ENCODE measurements at regions of chr18 and their contacts with region 1.

Region 1: DNA sequence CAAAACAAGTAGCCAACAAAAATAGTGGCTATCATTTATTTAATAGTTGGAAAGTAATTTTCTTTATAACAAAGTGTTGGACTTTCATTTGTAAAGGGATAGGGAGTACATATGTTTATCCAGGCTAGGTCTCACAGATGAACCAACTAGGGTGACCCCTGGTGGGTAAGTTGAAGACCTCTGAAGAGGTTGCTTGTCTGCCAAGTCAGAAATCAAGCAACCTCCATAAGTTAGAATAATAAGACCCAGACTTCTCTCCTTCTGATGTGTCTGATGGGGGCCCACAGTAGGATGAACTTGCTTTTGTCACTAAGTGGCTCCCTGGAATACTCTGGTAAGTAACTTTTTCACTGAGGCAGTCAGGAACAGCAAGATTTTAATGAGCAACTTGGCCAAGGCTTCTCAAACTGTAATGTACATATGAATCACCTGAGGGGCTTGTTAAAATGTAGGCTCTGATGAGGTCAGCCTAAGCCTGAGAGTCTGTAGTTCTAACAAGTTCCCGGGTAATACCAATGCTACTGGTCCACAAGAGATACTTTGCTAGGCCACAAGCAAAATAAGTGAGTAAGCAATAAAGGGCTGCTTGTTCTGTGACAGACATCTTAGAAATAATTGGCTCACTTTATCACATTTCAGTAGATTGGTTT is 319.6 kb downstream of the PIK3C3 start:
- DNase-seq: no peak
- ATAC-seq: peak; percentile 92
- H3K4me3 ChIP-seq: no peak overlapping the region
- H3K27ac ChIP-seq: no peak overlapping the region
- H3K4me1 ChIP-seq: no peaks in the 10 kb centered on the region
- H3K27me3 ChIP-seq: no peaks in the 10 kb centered on the region
- CTCF ChIP-seq: peak; percentile 19 to 47 (median 24); a peak in 3 of 6 replicates
- EP300 ChIP-seq: no peak
- POLR2A ChIP-seq: no peak
- RAD21 ChIP-seq: peak; percentile 36; the same call in 1 of the 2 replicates

Region 2: DNA sequence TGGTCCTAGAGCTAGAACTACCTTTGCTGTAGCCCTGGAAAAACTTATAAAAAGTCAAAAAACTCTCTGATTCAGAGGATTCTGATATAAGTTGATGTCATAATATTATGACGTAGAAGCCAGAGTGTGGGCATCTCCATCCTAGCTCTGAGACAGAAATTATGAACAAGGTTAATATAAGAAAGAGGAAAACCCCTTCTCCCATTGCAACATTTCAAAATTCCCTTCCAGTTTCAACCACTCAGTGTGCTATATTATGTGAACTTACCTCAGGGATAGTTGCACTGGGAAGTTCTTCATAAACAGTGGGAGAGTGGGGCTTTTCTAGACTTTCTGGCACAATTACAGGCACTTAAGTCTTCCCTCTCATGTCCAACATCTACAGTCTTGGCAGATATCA is 148.0 kb before region 1 on chr18:
- CTCF ChIA-PET with region 1: interaction called, 3 read pairs
- POLR2A ChIA-PET with region 1: no interaction called
- RAD21 ChIA-PET with region 1: no interaction called
- SMC1A ChIA-PET with region 1: interaction called, 13 read pairs
- in situ Hi-C with region 1: no loop called
- intact Hi-C with region 1: no loop called
- DNase-seq: no peak
- ATAC-seq: no peak
- H3K4me3 ChIP-seq: no peak overlapping the region
- H3K27ac ChIP-seq: no peak overlapping the region
- H3K4me1 ChIP-seq: no peaks in the 10 kb centered on the region
- H3K27me3 ChIP-seq: no peaks in the 10 kb centered on the region
- CTCF ChIP-seq: no peak
- EP300 ChIP-seq: no peak
- POLR2A ChIP-seq: no peak
- RAD21 ChIP-seq: no peak

Region 3: GRCh38 chr18:42157878-42158277 is 116.7 kb before region 1 on chr18:
- CTCF ChIA-PET with region 1: no interaction called
- POLR2A ChIA-PET with region 1: no interaction called
- RAD21 ChIA-PET with region 1: no interaction called
- SMC1A ChIA-PET with region 1: interaction called, 15 read pairs
- in situ Hi-C with region 1: no loop called
- intact Hi-C with region 1: no loop called
- DNase-seq: no peak
- ATAC-seq: no peak
- H3K4me3 ChIP-seq: no peak overlapping the region
- H3K27ac ChIP-seq: no peak overlapping the region
- H3K4me1 ChIP-seq: no peaks in the 10 kb centered on the region
- H3K27me3 ChIP-seq: no peaks in the 10 kb centered on the region
- CTCF ChIP-seq: no peak
- EP300 ChIP-seq: no peak
- POLR2A ChIP-seq: no peak
- RAD21 ChIP-seq: no peak

Region 4: DNA sequence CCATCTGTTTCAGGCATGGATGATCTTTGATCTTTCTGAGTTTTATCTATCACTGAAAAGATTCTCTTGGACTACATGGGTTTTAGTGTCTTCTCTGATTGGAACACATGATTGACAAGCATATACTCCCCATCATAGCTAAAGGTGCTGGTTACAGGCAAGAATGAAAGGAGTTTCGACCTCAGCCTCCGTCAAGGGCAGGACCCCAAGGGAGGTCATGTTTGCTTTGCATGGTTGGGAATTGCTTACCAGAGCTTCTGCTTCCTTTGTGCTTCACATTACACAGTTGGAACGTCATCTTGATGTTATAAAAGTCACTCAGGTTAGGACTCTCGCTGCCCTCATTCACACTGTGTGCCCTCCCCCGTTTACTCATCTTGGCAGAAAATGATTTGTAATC is 31.9 kb before region 1 on chr18:
- CTCF ChIA-PET with region 1: no interaction called
- POLR2A ChIA-PET with region 1: no interaction called
- RAD21 ChIA-PET with region 1: interaction called, 15 read pairs
- SMC1A ChIA-PET with region 1: interaction called, 13 read pairs
- in situ Hi-C with region 1: no loop called
- intact Hi-C with region 1: no loop called
- DNase-seq: no peak
- ATAC-seq: peak; percentile 84
- H3K4me3 ChIP-seq: no peak overlapping the region
- H3K27ac ChIP-seq: no peak overlapping the region
- H3K4me1 ChIP-seq: no peaks in the 10 kb centered on the region
- H3K27me3 ChIP-seq: no peaks in the 10 kb centered on the region
- CTCF ChIP-seq: no peak
- EP300 ChIP-seq: no peak
- POLR2A ChIP-seq: no peak
- RAD21 ChIP-seq: no peak

Measured in GM12878 (cell line).